ENCODE measurements at regions of chr2 and their contacts with region 1.

Region 1: GRCh38 chr2:109396202-109397180 is 217.3 kb downstream of the SEPTIN10 start:
- DNase-seq: peak; percentile 57
- ATAC-seq: peak; percentile 86
- H3K4me3 Mint-ChIP-seq: no peak overlapping the region
- H3K27ac Mint-ChIP-seq: peak overlapping the region; percentile 51
- H3K4me1 Mint-ChIP-seq: peaks cover 18% of the 10 kb centered on the region
- H3K27me3 Mint-ChIP-seq: no peaks in the 10 kb centered on the region

Region 2: DNA sequence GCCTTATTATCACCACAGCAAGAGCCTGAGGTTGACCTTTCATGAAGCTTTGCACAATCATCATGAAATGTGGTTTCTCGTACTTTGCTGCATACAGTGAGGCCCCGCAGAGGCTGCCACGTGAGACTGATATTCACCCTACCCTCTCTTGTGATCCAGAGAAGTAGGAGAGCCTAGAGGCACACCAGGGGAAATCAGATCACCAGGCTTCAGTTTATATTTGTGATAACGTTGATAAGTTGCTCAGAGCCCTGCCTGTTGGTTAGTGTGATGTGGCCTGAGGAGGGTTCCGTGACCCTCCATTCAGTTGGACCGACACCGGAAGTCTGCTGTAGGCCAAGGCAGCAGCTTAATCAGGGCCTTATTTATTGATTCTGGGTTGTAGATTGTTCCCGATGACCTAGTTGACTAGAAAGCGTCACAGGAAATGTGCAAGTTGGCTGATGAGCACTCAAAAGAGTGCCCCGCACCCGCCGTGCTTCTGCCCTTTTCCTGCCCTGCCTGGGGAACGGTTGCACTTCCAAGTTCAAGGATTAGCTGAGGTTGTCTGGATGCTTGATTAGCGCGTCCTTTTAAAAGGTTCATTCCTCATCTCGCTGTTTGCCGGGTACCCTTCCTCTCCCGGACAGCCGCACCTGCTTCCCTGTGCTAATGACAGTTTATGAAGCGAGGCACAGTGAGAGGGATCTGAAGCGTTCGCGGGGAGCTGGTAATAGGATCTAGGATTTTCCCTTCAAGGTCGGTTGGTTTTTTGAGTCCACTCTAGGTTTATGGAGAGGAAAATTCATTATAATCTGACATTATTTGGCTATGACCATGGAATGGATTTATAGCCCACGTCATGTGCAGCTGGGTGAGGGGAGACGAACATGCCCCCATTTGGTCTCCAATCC is 121.1 kb before region 1 on chr2:
- CTCF ChIA-PET with region 1: no interaction called
- POLR2A ChIA-PET with region 1: no interaction called
- intact Hi-C with region 1: loop called in 1 of 2 experiments (anchors 10 kb)
- DNase-seq: peak; percentile 34
- ATAC-seq: peak; percentile 64
- H3K4me3 Mint-ChIP-seq: no peak overlapping the region
- H3K27ac Mint-ChIP-seq: no peak overlapping the region
- H3K4me1 Mint-ChIP-seq: peaks cover 15% of the 10 kb centered on the region
- H3K27me3 Mint-ChIP-seq: no peaks in the 10 kb centered on the region

Region 3: GRCh38 chr2:109455731-109456691 is 59.5 kb after region 1 on chr2:
- CTCF ChIA-PET with region 1: no interaction called
- POLR2A ChIA-PET with region 1: no interaction called
- intact Hi-C with region 1: loop called in 1 of 2 experiments (anchors 2 kb)
- DNase-seq: no peak
- ATAC-seq: no peak
- H3K4me3 Mint-ChIP-seq: no peak overlapping the region
- H3K27ac Mint-ChIP-seq: no peak overlapping the region
- H3K4me1 Mint-ChIP-seq: peaks cover 19% of the 10 kb centered on the region
- H3K27me3 Mint-ChIP-seq: no peaks in the 10 kb centered on the region